Posterior vena cava (tissue), 2 donors: ENCODE measurements at regions of chr6 and their contacts with region 1.

Region 1: DNA sequence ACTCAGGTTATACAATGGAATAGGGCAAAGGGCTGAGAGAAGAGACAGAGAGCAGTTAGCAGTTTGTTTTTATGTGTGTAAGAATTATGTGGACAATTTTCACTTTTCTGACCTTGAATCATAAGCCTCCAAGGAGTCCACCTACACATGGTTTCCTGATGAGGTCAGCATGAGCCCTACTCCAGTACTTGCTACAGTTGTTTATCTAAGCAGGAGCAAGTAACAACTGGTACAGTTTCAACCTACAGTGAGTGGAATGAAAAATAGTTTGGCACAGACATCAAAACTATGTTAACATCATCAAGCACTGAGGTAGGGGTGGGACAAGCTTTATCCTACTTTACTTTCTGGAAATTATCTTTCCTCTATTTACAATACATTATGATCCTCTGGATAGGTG is 426.7 kb upstream of the ID4 start:
- DNase-seq: no peak

Region 2: GRCh38 chr6:19261642-19262041 is 148.8 kb before region 1 on chr6:
- intact Hi-C with region 1: no loop called
- DNase-seq: no peak

Region 3: GRCh38 chr6:19368509-19368908 is 42.0 kb before region 1 on chr6:
- intact Hi-C with region 1: loop called in 1 of 2 experiments (anchors 2 kb)
- DNase-seq: no peak

Region 4: GRCh38 chr6:20180935-20181334 is 770.5 kb after region 1 on chr6:
- intact Hi-C with region 1: no loop called
- DNase-seq: no peak